ENCODE measurements at regions of chr2 and their contacts with region 1.

Region 1: GRCh38 chr2:210072922-210073509 is 70.6 kb downstream of the RPE start:
- DNase-seq: peak in 2 of 9 donors; percentile 6 to 7
- ATAC-seq: no peak
- H3K4me3 ChIP-seq: no peak overlapping the region
- H3K4me3 Mint-ChIP-seq: no peak overlapping the region
- H3K27ac ChIP-seq: no peak overlapping the region
- H3K27ac Mint-ChIP-seq: no peak overlapping the region
- H3K4me1 ChIP-seq: no peaks in the 10 kb centered on the region
- H3K4me1 Mint-ChIP-seq: no peaks in the 10 kb centered on the region
- H3K27me3 ChIP-seq: no peaks in the 10 kb centered on the region
- H3K27me3 Mint-ChIP-seq: no peaks in the 10 kb centered on the region

Region 2: DNA sequence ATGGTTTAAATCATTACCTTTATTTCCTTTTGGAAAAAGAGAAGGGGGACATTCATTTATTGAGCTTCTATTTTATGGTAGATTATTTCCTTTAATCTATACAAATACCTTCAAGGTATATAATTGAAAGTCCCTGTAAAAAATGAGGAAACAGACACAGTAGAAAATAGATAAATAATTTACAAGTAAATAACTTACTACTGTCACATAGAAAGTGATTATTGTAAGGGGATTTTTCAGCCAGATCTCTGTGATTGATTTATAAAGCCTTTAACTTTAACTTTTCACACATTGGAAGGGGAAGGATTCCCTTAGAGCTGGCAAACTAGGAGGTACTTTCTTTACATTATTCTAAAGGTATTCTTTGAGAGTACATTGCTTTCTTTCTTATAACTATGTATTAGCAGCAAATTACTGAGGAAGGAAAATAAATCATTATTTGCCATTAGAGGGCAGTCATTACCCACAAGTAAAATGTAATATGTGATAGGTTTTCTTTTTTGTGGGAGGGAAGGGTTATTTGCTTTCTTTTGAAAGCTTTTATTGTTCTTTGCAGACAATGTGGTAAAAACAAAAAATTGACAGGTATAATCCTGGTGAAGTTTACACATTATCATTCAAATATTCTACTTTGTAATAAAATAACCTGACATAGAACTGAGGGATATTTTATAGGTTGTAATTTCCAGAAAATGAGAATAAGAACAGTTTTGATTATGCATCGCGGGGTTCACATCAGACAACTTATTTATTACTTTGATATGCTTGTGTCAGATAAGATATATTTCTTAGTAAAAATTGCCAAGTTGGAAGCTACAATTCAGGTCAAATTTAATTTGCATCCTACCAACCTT is 95.4 kb before region 1 on chr2:
- CTCF ChIA-PET with region 1: no interaction called
- POLR2A ChIA-PET with region 1: no interaction called
- intact Hi-C with region 1: loop called in 1 of 2 experiments (anchors 1 kb)
- DNase-seq: peak in 6 of 9 donors; percentile 27 to 61 (median 48)
- ATAC-seq: no peak
- H3K4me3 ChIP-seq: no peak overlapping the region
- H3K4me3 Mint-ChIP-seq: no peak overlapping the region
- H3K27ac ChIP-seq: no peak overlapping the region
- H3K27ac Mint-ChIP-seq: no peak overlapping the region
- H3K4me1 ChIP-seq: no peaks in the 10 kb centered on the region
- H3K4me1 Mint-ChIP-seq: no peaks in the 10 kb centered on the region
- H3K27me3 ChIP-seq: no peaks in the 10 kb centered on the region
- H3K27me3 Mint-ChIP-seq: peaks cover 4 to 18% (median 11%) of the 10 kb centered on the region in 5 donors